Right lobe of liver (tissue), 6 donors: ENCODE measurements at regions of chr3 and their contacts with region 1.

Region 1: DNA sequence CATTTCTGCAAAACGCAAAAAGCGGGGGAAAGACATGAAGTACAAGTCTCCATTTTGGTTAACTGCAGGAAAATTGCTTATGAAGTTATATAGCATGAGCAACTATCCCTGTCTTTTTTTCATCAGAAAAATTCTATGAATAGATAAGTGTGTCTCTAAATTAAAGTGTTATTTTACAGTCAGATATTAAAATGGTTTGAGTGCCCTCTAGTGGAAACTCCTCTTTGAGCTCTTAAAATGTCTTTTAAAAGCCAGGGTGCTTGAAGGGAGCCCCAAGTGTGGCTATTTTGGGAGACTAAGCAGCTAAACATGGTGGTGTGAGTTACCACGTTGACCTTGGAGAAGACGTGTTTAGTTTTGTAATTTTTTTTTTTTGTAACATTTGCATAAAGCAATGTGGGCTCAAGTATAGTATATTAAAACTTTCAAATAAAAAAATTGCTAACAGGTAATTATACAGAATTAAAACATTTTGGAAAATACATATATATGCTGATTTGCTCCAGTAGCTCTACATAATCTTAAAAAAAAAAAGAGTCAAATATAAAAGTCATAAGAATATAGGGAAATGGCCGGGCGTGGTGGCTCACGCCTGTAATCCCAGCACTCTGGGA is 77.2 kb downstream of the PPP2R3A start:
- DNase-seq: no peak
- ATAC-seq: peak in 2 of 4 donors; percentile 42 to 45
- H3K4me3 ChIP-seq: no peak overlapping the region
- H3K27ac ChIP-seq: no peak overlapping the region
- H3K4me1 ChIP-seq: no peaks in the 10 kb centered on the region
- H3K27me3 ChIP-seq: no peaks in the 10 kb centered on the region
- CTCF ChIP-seq: peak; percentile 49 to 65 (median 62)
- POLR2A ChIP-seq: no peak

Region 2: GRCh38 chr3:135929670-135930069 is 113.0 kb before region 1 on chr3:
- intact Hi-C with region 1: loop called in 1 of 2 experiments (anchors 10 kb)
- DNase-seq: no peak
- ATAC-seq: no peak
- H3K4me3 ChIP-seq: no peak overlapping the region
- H3K27ac ChIP-seq: no peak overlapping the region
- H3K4me1 ChIP-seq: no peaks in the 10 kb centered on the region
- H3K27me3 ChIP-seq: no peaks in the 10 kb centered on the region
- CTCF ChIP-seq: no peak
- POLR2A ChIP-seq: no peak